ENCODE measurements at regions of chr15 and their contacts with region 1.

Region 1: GRCh38 chr15:52679232-52680040 is at the start of gene ATOSA:
- DNase-seq: peak; percentile 98
- H3K4me3 ChIP-seq: peak within 1 kb of the TSS; percentile 67 to 99 (median 82)
- H3K27ac ChIP-seq: peak within 1 kb of the TSS; percentile 95 to 100 (median 97)
- H3K4me1 ChIP-seq: peaks cover 28 to 46% (median 43%) of the 10 kb centered on the region in 4 donors
- H3K27me3 ChIP-seq: no peaks in the 10 kb centered on the region
- CTCF ChIP-seq: peak in 2 of 3 experiments; percentile 1 to 2
- EP300 ChIP-seq: no peak
- POLR2A ChIP-seq: no peak
- total RNA-seq, gene ATOSA: 42.6 to 68.5 (median 46.0) TPM

Region 2: DNA sequence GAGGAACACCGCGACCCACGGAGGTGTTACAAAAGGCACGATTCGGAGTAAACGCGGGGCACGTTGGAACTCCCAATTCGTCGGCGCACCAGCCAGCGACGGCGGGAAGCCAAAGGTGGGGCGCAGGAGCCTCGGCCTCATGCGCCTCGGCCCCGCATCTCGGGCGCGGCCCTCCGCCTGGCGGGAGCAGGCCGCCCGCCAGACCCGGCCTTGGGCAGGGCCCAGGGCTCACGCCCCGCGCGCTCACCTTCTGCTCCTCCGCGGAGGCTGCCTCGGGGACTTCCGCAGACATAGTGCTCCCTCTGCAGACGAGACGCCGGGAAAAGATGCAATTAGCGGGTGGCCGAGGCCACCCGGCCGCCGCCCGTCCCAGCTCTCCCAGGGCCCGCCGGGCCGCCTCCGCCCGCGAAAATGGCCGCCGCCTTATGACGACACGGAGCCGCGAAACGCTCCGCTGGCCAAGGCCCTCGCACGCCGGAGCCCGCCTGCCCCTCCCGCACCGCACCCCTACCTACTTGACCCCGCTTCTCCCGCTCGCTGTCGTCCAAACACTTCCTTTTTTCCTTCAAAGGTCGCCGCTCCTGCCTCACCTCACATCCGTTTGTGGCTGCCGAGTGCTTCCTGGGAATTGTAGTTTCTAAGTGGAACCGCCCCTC is 110.7 kb before region 1 on chr15 and contains the start of gene ARPP19:
- intact Hi-C with region 1: loop called (anchors 2 kb)
- DNase-seq: peak; percentile 97
- H3K4me3 ChIP-seq: peak within 1 kb of the TSS; percentile 69 to 92 (median 74)
- H3K27ac ChIP-seq: peak within 1 kb of the TSS; percentile 90 to 97 (median 92)
- H3K4me1 ChIP-seq: peaks cover 32 to 46% (median 44%) of the 10 kb centered on the region in 4 donors
- H3K27me3 ChIP-seq: no peaks in the 10 kb centered on the region
- CTCF ChIP-seq: peak in 1 of 3 experiments; percentile 10
- EP300 ChIP-seq: no peak
- POLR2A ChIP-seq: peak; percentile 84
- total RNA-seq, gene ARPP19: 141 to 201 (median 166) TPM

Measured in esophagus muscularis mucosa (tissue), 4 donors.